K562 (cell line): ENCODE measurements at regions of chr4 and their contacts with region 1.

Region 1: GRCh38 chr4:85419103-85419502 is 55.8 kb upstream of the ARHGAP24 start:
- DNase-seq: no peak
- ATAC-seq: no peak
- H3K4me3 ChIP-seq: no peak overlapping the region
- H3K27ac ChIP-seq: no peak overlapping the region
- H3K4me1 ChIP-seq: no peaks in the 10 kb centered on the region
- H3K27me3 ChIP-seq: no peaks in the 10 kb centered on the region
- CTCF ChIP-seq: no peak
- EP300 ChIP-seq: no peak
- POLR2A ChIP-seq: no peak
- RAD21 ChIP-seq: no peak

Region 2: GRCh38 chr4:85498068-85498733 is 79.1 kb after region 1 on chr4:
- CTCF ChIA-PET with region 1: no interaction called
- POLR2A ChIA-PET with region 1: no interaction called
- in situ Hi-C with region 1: no loop called
- intact Hi-C with region 1: loop called (anchors 5 kb)
- DNase-seq: no peak
- ATAC-seq: 0 out of 3 replicates have a peak, but pooled peaks have one; percentile 33
- H3K4me3 ChIP-seq: no peak overlapping the region
- H3K27ac ChIP-seq: no peak overlapping the region
- H3K4me1 ChIP-seq: no peaks in the 10 kb centered on the region
- H3K27me3 ChIP-seq: no peaks in the 10 kb centered on the region
- CTCF ChIP-seq: no peak
- EP300 ChIP-seq: no peak
- POLR2A ChIP-seq: no peak
- RAD21 ChIP-seq: no peak